Psoas muscle (tissue), 8 donors: ENCODE measurements at regions of chr11 and their contacts with region 1.

Region 1: DNA sequence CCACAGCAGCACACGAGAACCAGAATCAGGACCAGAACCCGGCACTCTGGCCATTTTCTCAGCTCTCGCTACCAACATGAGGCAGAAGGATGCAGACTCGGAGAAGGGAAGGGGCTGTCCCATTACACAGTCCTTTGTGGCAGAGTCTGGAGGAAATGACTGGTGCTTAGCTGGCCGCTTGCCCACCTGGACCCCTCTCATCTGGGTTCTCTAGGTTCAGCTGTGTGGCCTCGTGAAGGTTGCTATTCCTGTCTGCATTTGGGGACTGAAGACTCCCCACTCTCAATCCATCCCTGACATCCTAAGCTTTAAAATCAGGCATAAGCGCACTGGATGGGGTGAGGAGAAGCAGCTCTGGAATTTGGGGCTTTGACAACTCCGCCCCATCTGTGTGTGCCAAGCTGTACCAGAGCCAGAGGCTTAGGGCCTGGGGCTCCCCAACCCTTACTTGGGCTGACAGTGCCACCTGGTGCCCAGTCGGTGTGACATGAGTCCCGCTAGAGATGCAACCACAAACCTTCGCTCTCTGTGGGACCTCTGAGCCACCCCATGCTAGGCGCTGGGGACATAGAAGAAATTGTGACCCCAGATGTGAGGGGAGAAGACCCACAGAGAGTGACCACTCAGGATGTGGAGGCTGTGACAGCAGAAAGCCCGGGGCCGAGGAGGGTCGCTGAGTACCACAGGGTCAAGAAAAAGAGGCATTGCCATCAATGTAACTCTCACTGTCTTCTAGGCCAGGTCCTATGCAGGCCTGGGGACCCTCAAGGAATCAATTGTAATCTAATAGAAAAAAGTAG is 35.9 kb upstream of the FCHSD2 start:
- DNase-seq: peak; percentile 79 to 90
- ATAC-seq: peak; percentile 72 to 86 (median 84)
- H3K4me3 ChIP-seq: no peak overlapping the region
- H3K27ac ChIP-seq: peak overlapping the region; percentile 50
- H3K4me1 ChIP-seq: peaks cover 14% of the 10 kb centered on the region
- H3K27me3 ChIP-seq: no peaks in the 10 kb centered on the region
- CTCF ChIP-seq: peak; percentile 82

Region 2: DNA sequence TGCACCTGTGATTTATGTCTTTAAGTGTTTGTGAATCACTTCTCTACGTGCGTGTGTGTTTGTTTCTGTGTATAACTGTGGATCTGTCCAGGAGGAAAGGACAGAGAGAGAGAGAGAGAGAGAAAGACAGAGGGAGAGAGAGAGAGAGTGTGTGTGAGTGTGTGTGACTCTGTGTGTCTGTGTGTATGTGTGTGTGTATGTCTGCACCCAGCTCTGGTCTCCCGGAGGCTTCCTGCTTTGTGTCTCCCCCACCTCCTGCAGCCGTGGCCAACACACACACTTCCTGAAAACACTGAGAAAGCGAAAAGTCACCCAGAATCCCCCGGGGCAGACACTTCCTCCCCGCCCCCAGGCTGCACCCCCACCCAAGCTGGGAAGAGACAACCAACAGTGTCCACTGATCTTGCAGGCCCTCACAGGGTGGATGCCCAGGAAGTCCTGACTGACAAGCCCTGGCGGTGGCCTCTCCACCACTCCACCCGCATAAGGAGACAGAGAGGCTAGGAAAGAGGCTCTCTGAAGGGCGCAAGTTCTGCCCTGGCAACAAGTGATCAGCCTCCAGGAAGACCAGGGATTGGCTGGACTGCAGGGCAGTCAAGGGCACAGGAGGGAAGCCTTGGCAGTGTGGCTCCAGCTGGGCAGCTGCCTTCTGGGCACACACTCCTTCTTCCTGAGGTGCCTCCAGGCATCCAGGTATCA is 455.8 kb before region 1 on chr11:
- intact Hi-C with region 1: loop called (anchors 5 kb)
- DNase-seq: peak; percentile 85 to 92
- ATAC-seq: peak; percentile 82 to 88 (median 86)
- H3K4me3 ChIP-seq: peak overlapping the region; percentile 76
- H3K27ac ChIP-seq: peak overlapping the region; percentile 89
- H3K4me1 ChIP-seq: peaks cover 46% of the 10 kb centered on the region
- H3K27me3 ChIP-seq: no peaks in the 10 kb centered on the region
- CTCF ChIP-seq: no peak

Region 3: DNA sequence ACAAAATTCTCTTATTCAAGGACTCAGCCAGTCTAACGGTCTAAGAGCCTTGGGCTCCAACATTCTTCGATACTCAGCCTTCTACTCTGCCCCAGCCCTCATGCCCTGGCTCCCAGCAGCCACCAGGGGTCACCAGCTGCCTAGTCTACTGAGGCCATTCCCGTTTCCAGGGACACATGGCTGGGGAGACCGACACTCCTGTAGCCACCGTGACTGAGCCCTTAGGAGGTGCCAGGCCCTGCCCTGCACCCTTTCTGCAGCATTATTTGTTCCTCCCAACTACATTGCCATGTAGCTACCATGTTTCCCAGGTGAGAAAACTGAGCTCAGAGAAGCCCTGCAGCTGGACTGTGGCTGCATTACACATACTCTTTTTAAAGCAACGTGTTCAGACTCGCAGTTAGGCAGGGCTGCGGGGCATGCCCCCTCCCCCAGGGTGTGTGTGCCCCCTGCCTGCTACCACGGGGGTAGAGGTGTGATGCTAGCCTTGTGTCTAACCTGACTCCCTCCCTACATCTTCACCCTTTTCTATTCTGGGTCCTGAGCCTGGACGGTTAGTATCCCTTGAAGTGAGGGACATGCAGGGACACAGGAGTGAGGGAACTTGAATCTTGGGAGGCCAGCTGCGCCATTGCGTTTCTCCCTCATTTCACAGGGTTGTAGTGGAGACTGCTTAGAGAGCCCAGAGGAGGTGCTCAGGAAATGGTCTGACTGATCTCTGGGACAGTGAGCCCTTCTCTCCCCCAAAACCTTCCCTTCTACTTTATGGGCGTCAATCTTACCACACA is 346.3 kb before region 1 on chr11:
- intact Hi-C with region 1: loop called (anchors 1 kb)
- DNase-seq: peak; percentile 84 to 91
- ATAC-seq: peak; percentile 90 to 92 (median 92)
- H3K4me3 ChIP-seq: no peak overlapping the region
- H3K27ac ChIP-seq: peak overlapping the region; percentile 72
- H3K4me1 ChIP-seq: peaks cover 14% of the 10 kb centered on the region
- H3K27me3 ChIP-seq: no peaks in the 10 kb centered on the region
- CTCF ChIP-seq: peak; percentile 90

Region 4: GRCh38 chr11:72924568-72925190 is 253.3 kb before region 1 on chr11:
- intact Hi-C with region 1: loop called (anchors 2 kb)
- DNase-seq: no peak
- ATAC-seq: peak in 2 of 4 donors; percentile 63 to 71
- H3K4me3 ChIP-seq: no peak overlapping the region
- H3K27ac ChIP-seq: no peak overlapping the region
- H3K4me1 ChIP-seq: peaks cover under 1% of the 10 kb centered on the region
- H3K27me3 ChIP-seq: no peaks in the 10 kb centered on the region
- CTCF ChIP-seq: peak; percentile 53

Region 5: GRCh38 chr11:73141848-73142286 is 36.1 kb before region 1 on chr11:
- intact Hi-C with region 1: loop called (anchors 5 kb)
- DNase-seq: peak; percentile 80 to 87
- ATAC-seq: peak; percentile 22 to 39 (median 32)
- H3K4me3 ChIP-seq: peak overlapping the region; percentile 78
- H3K27ac ChIP-seq: peak overlapping the region; percentile 95
- H3K4me1 ChIP-seq: peaks cover 18% of the 10 kb centered on the region
- H3K27me3 ChIP-seq: no peaks in the 10 kb centered on the region
- CTCF ChIP-seq: no peak

Region 6: GRCh38 chr11:73157053-73158010 is 20.6 kb before region 1 on chr11:
- intact Hi-C with region 1: no loop called
- DNase-seq: peak; percentile 49 to 69
- ATAC-seq: peak; percentile 58 to 85 (median 76)
- H3K4me3 ChIP-seq: no peak overlapping the region
- H3K27ac ChIP-seq: peak overlapping the region; percentile 61
- H3K4me1 ChIP-seq: peaks cover 48% of the 10 kb centered on the region
- H3K27me3 ChIP-seq: no peaks in the 10 kb centered on the region
- CTCF ChIP-seq: no peak